ENCODE measurements at regions of chr2 and their contacts with region 1.

Region 1: GRCh38 chr2:96336104-96336775 is 674 bp downstream of the NCAPH start:
- DNase-seq: no peak
- ATAC-seq: no peak
- H3K4me3 ChIP-seq: peak overlapping the region; percentile 78
- H3K4me3 Mint-ChIP-seq: peak overlapping the region; percentile 60
- H3K27ac ChIP-seq: peak overlapping the region in 1 of 2 donors; percentile 85
- H3K27ac Mint-ChIP-seq: peak overlapping the region; percentile 54
- H3K4me1 ChIP-seq: peaks cover 22% of the 10 kb centered on the region
- H3K4me1 Mint-ChIP-seq: peaks cover 32% of the 10 kb centered on the region
- H3K27me3 ChIP-seq: no peaks in the 10 kb centered on the region
- H3K27me3 Mint-ChIP-seq: no peaks in the 10 kb centered on the region
- CTCF ChIP-seq: no peak

Region 2: DNA sequence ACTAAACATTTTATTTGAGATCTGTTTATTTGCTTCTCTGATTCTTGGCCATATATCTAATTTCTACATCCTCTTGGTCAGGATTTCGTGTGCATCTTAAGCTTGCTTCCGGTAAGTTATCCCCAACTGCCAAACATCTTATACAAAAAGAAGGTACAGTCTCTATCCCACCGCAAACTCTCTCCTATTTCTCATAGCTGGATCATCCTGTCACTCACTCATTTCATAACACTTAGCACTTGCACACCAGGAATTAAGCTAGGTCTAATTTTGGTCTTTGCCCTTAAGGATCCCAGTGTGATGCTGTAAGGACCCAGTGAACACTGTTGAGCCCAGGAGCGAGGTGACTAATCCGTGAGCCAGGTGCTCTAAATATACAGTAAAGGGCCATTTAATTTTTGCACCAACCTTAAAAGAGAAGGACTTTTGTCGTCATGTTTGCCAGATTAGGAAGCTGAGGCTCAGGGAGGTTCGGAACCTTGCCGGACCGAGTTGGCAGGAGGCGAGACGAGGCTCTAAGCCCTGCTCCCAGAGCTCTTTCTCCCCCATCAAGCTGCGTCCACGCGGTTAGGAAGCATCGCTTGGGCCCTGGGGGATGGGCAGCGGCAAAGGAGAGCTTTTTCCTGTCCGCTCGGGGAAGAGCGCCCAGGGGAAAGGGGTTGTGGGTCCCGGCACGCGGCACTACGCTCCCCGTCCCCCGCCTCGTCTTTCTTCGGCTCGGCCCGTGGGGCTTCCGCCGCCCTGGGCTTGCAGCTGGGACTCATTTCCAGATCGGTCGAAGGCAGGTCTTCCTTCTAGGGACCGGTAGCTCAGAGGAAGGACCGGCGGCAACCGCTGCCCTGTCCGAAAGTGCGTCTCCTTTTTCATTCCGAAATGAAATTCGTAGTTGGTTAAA is 15.3 kb before region 1 on chr2:
- CTCF ChIA-PET with region 1: interaction called, 3 read pairs
- POLR2A ChIA-PET with region 1: interaction called, 32 read pairs
- intact Hi-C with region 1: no loop called
- DNase-seq: peak in 6 of 14 experiments; percentile 1 to 50 (median 24)
- ATAC-seq: no peak
- H3K4me3 ChIP-seq: peak overlapping the region; percentile 92
- H3K4me3 Mint-ChIP-seq: peak overlapping the region; percentile 84
- H3K27ac ChIP-seq: peak overlapping the region in 1 of 2 donors; percentile 63
- H3K27ac Mint-ChIP-seq: peak overlapping the region; percentile 16
- H3K4me1 ChIP-seq: peaks cover 64% of the 10 kb centered on the region
- H3K4me1 Mint-ChIP-seq: peaks cover 46% of the 10 kb centered on the region
- H3K27me3 ChIP-seq: no peaks in the 10 kb centered on the region
- H3K27me3 Mint-ChIP-seq: peaks cover 3% of the 10 kb centered on the region
- CTCF ChIP-seq: no peak

Region 3: DNA sequence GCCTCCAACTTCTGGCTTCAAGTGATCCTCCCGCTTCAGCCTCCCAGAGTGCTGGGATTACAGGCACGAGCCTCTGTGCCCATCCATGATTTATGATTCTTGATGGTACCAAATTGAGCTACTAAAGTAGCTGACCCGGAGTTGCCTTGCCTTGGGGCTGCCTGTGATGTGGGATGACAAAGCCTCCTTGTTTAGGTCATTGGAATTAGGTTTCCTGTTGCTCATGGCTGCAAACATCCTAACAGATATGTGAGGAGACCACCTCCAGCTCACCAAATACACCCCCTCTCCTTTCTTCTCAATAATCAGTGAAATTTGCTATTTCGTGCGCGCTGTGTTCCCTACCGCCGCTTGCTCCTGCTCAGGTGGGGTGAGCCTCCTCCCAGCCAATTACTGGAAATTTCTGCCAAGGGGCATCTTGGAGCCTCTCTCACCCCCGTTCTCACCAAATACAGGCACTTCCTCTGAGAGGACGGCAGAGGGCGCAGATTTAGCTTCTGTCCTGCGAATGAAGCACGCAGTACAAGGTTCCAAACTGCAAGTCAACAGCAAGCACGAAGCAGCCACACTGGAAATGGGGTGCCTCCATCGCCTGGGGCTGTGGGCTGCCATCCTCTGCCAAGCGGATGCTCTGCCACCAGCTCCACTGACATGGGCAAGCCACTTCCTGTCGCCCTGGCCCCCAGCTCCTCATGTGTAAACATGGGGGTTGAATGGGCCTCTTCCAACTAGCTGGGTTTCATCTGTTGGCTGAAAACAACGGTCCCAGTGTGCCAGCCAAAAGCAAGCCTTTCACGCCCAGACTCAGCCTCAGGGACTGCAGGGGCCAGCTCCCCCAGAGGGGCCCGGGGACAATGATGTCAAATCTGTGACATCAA is 71.0 kb after region 1 on chr2:
- CTCF ChIA-PET with region 1: no interaction called
- POLR2A ChIA-PET with region 1: interaction called, 10 read pairs
- intact Hi-C with region 1: no loop called
- DNase-seq: peak; percentile 58 to 91 (median 76)
- ATAC-seq: peak; percentile 93
- H3K4me3 ChIP-seq: no peak overlapping the region
- H3K4me3 Mint-ChIP-seq: peak overlapping the region; percentile 79
- H3K27ac ChIP-seq: peak overlapping the region; percentile 33 to 35
- H3K27ac Mint-ChIP-seq: peak overlapping the region; percentile 84
- H3K4me1 ChIP-seq: peaks cover 38% of the 10 kb centered on the region
- H3K4me1 Mint-ChIP-seq: peaks cover 41% of the 10 kb centered on the region
- H3K27me3 ChIP-seq: no peaks in the 10 kb centered on the region
- H3K27me3 Mint-ChIP-seq: no peaks in the 10 kb centered on the region
- CTCF ChIP-seq: peak; percentile 74

Region 4: DNA sequence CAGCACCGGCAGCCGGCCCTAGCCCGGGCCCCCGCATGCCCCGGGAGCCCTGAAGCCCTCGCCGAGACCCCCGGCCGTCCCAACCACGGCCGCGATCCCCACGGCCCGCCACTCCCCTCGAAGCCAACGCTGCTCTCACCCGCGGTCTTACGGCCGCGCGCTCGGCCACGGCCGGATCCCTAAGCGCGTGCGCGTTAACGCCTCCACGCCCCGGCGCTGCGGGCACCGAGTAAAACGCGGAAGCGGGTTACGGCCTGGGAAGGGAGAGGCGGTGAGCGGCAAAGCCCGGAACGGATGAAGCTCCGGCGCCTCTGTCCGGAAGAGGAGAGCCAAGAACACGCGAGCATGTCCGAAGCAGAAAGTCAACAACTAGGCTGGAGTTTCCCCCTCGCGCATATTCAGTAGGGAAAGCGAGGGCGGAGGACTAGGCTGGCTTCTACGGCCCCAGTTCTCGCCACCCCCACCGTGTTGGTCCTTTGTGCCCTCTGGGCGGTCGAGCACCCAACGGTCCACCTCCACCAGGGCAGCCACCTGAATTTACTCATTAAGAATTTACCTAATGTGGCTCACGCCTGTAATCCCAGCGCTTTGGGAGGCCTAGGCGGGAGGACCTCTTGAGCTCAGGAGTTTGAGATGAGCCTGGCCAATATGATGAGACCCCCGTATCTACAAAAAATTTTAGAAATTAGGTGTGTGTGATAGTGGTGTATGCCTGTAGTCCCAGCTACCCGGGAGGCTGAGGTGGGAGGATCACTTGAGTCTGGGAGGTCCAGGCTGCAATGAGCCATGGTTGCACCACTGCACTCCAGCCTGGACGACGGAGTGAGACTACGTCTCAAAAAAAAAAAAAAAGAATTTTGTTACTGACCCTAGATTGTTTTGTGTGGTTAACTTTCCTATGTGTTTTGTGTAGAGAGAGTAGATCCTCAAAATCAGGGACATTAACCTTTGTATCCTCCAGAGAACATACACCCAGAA is 302.2 kb after region 1 on chr2 and contains the start of gene KANSL3:
- CTCF ChIA-PET with region 1: no interaction called
- POLR2A ChIA-PET with region 1: no interaction called
- intact Hi-C with region 1: loop called in 1 of 2 experiments (anchors 5 kb)
- DNase-seq: peak; percentile 79 to 95 (median 84)
- ATAC-seq: peak; percentile 85
- H3K4me3 ChIP-seq: peak within 1 kb of the TSS; percentile 98
- H3K4me3 Mint-ChIP-seq: peak within 1 kb of the TSS; percentile 99
- H3K27ac ChIP-seq: peak within 1 kb of the TSS; percentile 69 to 75
- H3K27ac Mint-ChIP-seq: peak within 1 kb of the TSS; percentile 96
- H3K4me1 ChIP-seq: peaks cover 29% of the 10 kb centered on the region
- H3K4me1 Mint-ChIP-seq: peaks cover 45% of the 10 kb centered on the region
- H3K27me3 ChIP-seq: no peaks in the 10 kb centered on the region
- H3K27me3 Mint-ChIP-seq: no peaks in the 10 kb centered on the region
- CTCF ChIP-seq: no peak
- total RNA-seq, gene KANSL3: 54.4 to 61.8 TPM

Region 5: GRCh38 chr2:96868555-96869280 is 532.5 kb after region 1 on chr2:
- CTCF ChIA-PET with region 1: no interaction called
- POLR2A ChIA-PET with region 1: no interaction called
- intact Hi-C with region 1: no loop called
- DNase-seq: peak; percentile 25 to 78 (median 55)
- ATAC-seq: peak; percentile 24
- H3K4me3 ChIP-seq: peak overlapping the region; percentile 80
- H3K4me3 Mint-ChIP-seq: peak overlapping the region; percentile 92
- H3K27ac ChIP-seq: peak overlapping the region; percentile 66 to 69
- H3K27ac Mint-ChIP-seq: peak overlapping the region; percentile 85
- H3K4me1 ChIP-seq: peaks cover 55% of the 10 kb centered on the region
- H3K4me1 Mint-ChIP-seq: peaks cover 49% of the 10 kb centered on the region
- H3K27me3 ChIP-seq: no peaks in the 10 kb centered on the region
- H3K27me3 Mint-ChIP-seq: no peaks in the 10 kb centered on the region
- CTCF ChIP-seq: peak; percentile 72

Measured in CD4-positive, alpha-beta T cell (primary cell).